ENCODE measurements at regions of chr19 and their contacts with region 1.

Region 1: DNA sequence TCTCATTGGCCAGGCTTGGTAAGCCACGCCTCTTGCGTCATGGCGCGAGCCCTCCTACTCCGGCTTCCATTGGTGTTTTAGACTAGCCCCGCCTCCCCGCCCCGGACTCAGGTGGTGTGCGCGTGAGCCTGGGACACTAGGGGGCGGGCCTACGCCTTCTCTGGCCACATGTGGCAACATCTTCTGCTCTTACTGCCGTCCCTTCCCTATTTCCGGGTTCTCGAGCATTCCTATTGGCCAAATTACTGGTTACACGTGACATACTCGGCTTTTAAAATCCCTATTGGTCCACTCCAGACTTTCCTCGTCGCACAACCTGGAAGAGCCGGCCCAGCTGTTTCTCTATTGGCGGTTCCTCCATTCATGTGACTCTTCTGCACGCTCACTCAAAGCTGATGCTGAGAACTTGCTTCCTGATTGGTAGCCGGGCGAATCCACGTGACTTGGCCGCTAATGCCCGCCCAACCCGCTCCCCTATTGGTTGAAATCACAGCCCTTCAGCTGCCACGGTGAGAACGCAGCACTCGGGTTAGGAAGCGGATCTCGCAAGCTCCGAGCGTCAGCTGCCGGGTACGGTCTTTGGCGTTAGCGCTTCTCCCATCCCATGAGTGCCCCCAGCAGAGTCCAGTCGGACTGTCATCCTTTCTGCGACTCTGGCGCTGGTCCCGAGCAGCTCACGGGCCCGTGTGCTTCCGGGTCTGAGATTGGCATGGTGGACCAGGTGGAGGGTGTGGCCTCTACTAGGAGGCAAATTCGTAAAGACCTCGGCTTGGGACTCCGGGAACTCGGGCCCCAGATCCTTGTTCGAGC is at the start of gene BLOC1S3:
- DNase-seq: peak; percentile 100
- ATAC-seq: peak; percentile 99
- H3K4me3 ChIP-seq: peak within 1 kb of the TSS; percentile 45 to 79
- H3K27ac ChIP-seq: peak within 1 kb of the TSS; percentile 67 to 89
- H3K4me1 ChIP-seq: peaks cover 0 to 2% of the 10 kb centered on the region in 2 donors
- H3K27me3 ChIP-seq: no peaks in the 10 kb centered on the region
- total RNA-seq, gene BLOC1S3: 7.5 to 12.2 TPM

Region 2: DNA sequence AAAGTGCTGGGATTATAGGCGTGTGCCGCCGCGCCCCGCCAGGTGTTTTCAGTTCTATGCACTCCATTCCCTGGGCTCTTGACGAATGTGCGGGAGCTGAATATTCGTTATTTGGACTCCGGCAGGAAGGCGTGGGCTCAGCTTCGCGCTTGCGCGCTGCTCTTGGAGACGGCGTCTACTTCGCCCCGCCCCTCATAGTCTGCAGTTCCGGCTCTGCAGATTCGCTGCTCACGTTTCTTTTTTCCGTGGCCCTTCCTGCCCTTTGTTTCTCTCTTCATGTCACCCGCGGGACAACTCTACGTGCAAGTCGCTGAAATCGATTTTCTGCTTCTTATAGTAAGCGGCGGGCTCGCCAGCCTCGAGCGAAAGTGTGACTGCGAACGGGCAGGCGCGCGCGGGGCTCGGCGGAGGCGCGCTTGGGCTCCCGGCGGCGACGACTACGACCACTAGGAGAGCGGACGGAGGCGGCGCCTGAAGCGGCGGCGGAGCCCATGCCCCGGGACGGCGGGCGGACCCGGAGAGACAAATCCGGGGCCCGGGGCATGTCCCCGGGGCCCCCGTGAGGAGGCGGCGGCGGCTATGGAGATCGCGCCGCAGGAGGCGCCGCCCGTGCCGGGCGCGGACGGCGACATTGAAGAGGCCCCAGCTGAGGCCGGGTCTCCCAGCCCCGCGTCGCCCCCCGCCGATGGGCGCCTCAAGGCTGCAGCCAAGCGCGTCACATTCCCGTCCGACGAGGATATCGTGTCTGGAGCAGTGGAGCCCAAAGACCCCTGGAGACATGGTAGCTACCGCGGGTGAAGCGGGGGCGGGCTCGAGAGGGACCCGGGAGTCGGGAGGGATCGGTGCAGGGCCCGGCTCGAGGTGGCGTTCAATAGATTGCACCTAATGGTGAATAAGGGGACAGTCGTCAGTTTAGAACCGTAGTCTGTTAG is 85.5 kb before region 1 on chr19 and contains the start of gene PPP1R37:
- intact Hi-C with region 1: loop called in 1 of 2 experiments (anchors 5 kb)
- DNase-seq: peak; percentile 97
- ATAC-seq: peak; percentile 96
- H3K4me3 ChIP-seq: peak within 1 kb of the TSS; percentile 56 to 65
- H3K27ac ChIP-seq: peak within 1 kb of the TSS in 1 of 2 donors; percentile 75
- H3K4me1 ChIP-seq: peaks cover 0 to 2% of the 10 kb centered on the region in 2 donors
- H3K27me3 ChIP-seq: no peaks in the 10 kb centered on the region
- total RNA-seq, gene PPP1R37: 12.1 to 22.7 TPM

Region 3: GRCh38 chr19:45224645-45225044 is 46.2 kb after region 1 on chr19:
- intact Hi-C with region 1: no loop called
- DNase-seq: no peak
- ATAC-seq: no peak
- H3K4me3 ChIP-seq: no peak overlapping the region
- H3K27ac ChIP-seq: no peak overlapping the region
- H3K4me1 ChIP-seq: no peaks in the 10 kb centered on the region
- H3K27me3 ChIP-seq: no peaks in the 10 kb centered on the region

Region 4: DNA sequence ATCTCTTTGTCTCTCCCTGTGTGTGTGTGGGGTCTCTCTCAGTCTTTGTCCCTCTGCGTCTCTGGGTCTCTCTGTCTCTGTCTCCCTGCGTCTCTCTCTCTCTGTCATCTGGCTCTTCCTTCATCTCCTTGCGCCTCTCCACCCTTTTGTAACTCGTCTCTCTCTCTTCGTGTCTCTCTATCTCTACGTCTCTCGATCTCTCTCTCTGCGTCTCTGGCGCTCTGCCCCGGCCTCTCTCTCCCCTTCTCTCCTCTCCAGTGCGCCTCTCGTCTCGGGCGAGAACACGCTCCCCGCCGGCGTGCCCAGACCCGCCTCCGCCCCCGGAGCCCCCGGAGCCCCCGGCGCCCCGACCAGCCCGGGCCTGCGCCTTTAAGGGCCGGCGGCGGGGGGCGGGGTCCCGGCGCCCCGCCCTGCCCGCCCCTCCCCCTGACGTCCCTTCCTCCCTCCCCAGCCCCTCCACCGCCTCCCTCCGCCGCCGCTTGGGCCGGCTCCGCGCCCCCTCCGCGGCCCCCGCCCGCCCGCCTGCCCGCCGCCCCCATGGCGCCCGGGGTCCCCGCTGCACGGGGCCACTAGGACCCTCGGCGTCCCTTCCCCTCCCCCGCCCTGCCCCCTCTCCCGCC is 72.5 kb after region 1 on chr19 and contains the start of gene MARK4:
- intact Hi-C with region 1: loop called in 1 of 2 experiments (anchors 5 kb)
- DNase-seq: peak; percentile 67 to 85
- ATAC-seq: peak; percentile 67
- H3K4me3 ChIP-seq: peak within 1 kb of the TSS; percentile 83 to 97
- H3K27ac ChIP-seq: no peak within 1 kb of the TSS
- H3K4me1 ChIP-seq: no peaks in the 10 kb centered on the region
- H3K27me3 ChIP-seq: no peaks in the 10 kb centered on the region
- total RNA-seq, gene MARK4: 40.3 to 40.4 TPM